ENCODE measurements at regions of chr2 and their contacts with region 1.

Region 1: GRCh38 chr2:210195101-210195852 is 24.1 kb upstream of the KANSL1L start:
- DNase-seq: peak; percentile 43
- H3K4me3 Mint-ChIP-seq: no peak overlapping the region
- H3K27ac Mint-ChIP-seq: no peak overlapping the region
- H3K4me1 Mint-ChIP-seq: peaks cover 6% of the 10 kb centered on the region
- H3K27me3 Mint-ChIP-seq: no peaks in the 10 kb centered on the region
- CTCF ChIP-seq: peak; percentile 53

Region 2: DNA sequence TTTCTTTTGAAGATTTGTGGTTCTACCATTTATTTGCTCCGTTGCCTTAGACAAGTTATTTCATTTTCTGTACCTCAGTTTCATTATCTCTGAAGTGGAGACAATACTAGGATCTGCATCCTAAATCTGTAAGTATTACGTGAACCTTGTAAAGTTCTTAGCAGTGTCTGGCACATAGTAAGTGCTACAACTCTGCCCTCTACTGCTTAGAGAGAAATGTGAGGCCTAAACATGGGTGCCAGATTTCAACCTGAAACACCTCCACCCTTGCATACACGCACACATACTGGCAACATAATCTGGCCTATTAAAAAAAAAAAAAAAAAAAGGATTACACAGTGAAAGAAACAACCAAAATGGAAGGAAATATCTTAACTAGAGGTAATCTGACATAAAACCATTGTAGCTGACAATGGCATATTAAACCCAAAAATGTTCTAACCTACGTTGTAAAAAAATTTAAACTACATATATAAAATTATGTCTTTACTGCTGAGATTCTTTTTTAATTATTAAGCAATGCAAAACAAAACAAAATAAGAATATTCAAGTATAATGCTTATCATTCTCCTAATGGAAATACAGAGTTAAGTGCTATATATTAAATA is 638.8 kb before region 1 on chr2:
- CTCF ChIA-PET with region 1: interaction called, 3 read pairs
- POLR2A ChIA-PET with region 1: no interaction called
- intact Hi-C with region 1: loop called (anchors 5 kb)
- DNase-seq: peak; percentile 62
- H3K4me3 Mint-ChIP-seq: no peak overlapping the region
- H3K27ac Mint-ChIP-seq: no peak overlapping the region
- H3K4me1 Mint-ChIP-seq: no peaks in the 10 kb centered on the region
- H3K27me3 Mint-ChIP-seq: no peaks in the 10 kb centered on the region
- CTCF ChIP-seq: peak; percentile 61

Region 3: GRCh38 chr2:209986415-209986814 is 208.9 kb before region 1 on chr2:
- CTCF ChIA-PET with region 1: interaction called, 10 read pairs
- POLR2A ChIA-PET with region 1: no interaction called
- intact Hi-C with region 1: no loop called
- DNase-seq: no peak
- H3K4me3 Mint-ChIP-seq: no peak overlapping the region
- H3K27ac Mint-ChIP-seq: no peak overlapping the region
- H3K4me1 Mint-ChIP-seq: no peaks in the 10 kb centered on the region
- H3K27me3 Mint-ChIP-seq: peaks cover 11% of the 10 kb centered on the region
- CTCF ChIP-seq: no peak

Region 4: DNA sequence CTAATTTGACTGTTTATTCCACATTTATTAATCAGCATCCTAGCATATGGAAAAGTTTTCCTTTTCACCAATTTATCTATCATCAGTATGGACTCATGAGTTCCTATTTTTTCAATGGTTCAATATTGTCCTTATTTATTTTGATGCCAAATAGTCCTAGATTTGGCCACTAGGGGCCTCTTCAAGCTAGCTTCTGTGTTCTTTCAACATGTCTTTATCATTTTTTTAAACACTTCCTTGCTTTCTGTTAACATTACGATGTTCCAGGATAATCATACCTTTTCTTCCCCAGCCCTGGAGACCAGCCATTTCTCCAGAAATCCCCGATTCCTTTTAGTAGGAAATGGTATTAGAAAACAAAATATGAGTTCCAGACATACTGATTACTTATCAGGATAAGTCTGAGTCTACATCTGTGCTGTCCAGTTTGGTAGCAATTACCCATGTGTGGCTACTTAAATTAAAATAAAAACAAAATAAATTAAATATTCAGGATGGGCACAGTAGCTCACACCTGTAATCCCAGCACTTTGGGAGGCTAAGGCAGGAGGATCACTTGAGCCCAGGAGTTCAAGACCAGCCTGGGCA is 122.3 kb before region 1 on chr2:
- CTCF ChIA-PET with region 1: interaction called, 25 read pairs
- POLR2A ChIA-PET with region 1: no interaction called
- intact Hi-C with region 1: loop called (anchors 1 kb)
- DNase-seq: peak; percentile 57
- H3K4me3 Mint-ChIP-seq: no peak overlapping the region
- H3K27ac Mint-ChIP-seq: no peak overlapping the region
- H3K4me1 Mint-ChIP-seq: no peaks in the 10 kb centered on the region
- H3K27me3 Mint-ChIP-seq: no peaks in the 10 kb centered on the region
- CTCF ChIP-seq: peak; percentile 52

Region 5: DNA sequence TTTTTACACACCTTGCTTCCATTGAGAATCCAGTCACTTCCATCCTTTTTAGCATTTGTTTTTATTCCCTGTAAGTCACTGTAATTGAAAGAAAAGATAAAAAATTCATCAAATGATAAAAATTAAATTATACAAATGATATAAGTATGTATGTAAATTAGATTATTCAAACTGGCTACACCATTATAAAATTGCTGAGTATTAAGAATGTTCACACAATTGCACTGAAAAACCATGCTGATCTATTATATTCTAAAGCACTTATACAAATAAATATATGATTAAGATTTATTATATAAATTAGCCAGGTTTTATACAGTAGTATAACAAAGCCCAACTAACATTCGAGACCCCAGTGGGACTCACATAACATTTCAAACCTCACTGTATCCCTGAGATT is 14.9 kb after region 1 on chr2:
- CTCF ChIA-PET with region 1: interaction called, 10 read pairs
- POLR2A ChIA-PET with region 1: no interaction called
- intact Hi-C with region 1: no loop called
- DNase-seq: no peak
- H3K4me3 Mint-ChIP-seq: no peak overlapping the region
- H3K27ac Mint-ChIP-seq: no peak overlapping the region
- H3K4me1 Mint-ChIP-seq: no peaks in the 10 kb centered on the region
- H3K27me3 Mint-ChIP-seq: no peaks in the 10 kb centered on the region
- CTCF ChIP-seq: no peak

Region 6: GRCh38 chr2:210392469-210392951 is 197.2 kb after region 1 on chr2:
- CTCF ChIA-PET with region 1: no interaction called
- POLR2A ChIA-PET with region 1: no interaction called
- intact Hi-C with region 1: no loop called
- DNase-seq: no peak
- H3K4me3 Mint-ChIP-seq: no peak overlapping the region
- H3K27ac Mint-ChIP-seq: no peak overlapping the region
- H3K4me1 Mint-ChIP-seq: no peaks in the 10 kb centered on the region
- H3K27me3 Mint-ChIP-seq: peaks cover 13% of the 10 kb centered on the region
- CTCF ChIP-seq: no peak